Activated CD4-positive, alpha-beta memory T cell treated with anti-CD3 and anti-CD28 coated beads, Interleukin-2, amount 10 ng/mL, durations not matched to agents 7 days and 5 days (primary cell): ENCODE measurements at regions of chr9 and their contacts with region 1.

Region 1: GRCh38 chr9:71806901-71807307 is 38.6 kb upstream of the CEMIP2 start:
- DNase-seq: peak; percentile 68
- H3K4me3 Mint-ChIP-seq: no peak overlapping the region
- H3K27ac Mint-ChIP-seq: no peak overlapping the region
- H3K4me1 Mint-ChIP-seq: peaks cover 5% of the 10 kb centered on the region
- H3K27me3 Mint-ChIP-seq: no peaks in the 10 kb centered on the region

Region 2: GRCh38 chr9:71741711-71742648 is 64.9 kb before region 1 on chr9:
- CTCF ChIA-PET with region 1: no interaction called
- POLR2A ChIA-PET with region 1: no interaction called
- DNase-seq: no peak
- H3K4me3 Mint-ChIP-seq: no peak overlapping the region
- H3K27ac Mint-ChIP-seq: no peak overlapping the region
- H3K4me1 Mint-ChIP-seq: peaks cover 2% of the 10 kb centered on the region
- H3K27me3 Mint-ChIP-seq: no peaks in the 10 kb centered on the region

Region 3: DNA sequence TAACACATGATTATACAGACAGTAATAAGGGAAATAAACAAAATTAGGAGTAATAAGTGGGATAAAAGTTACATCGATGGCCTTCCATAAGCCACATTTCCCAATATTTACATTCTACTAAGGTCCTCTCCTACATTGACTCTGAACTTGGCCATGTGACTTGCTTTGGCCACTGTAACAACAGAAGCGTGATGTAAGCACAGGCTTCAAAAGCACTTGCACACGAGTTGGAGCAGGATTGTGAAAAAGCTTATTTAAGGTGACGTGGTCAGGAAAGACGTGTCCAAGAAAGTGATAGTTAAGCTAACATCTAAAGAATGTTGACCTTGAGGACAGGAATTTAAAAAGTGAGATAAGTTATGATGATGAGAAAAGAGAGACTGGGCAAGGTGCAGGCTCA is 28.8 kb before region 1 on chr9:
- CTCF ChIA-PET with region 1: interaction called, 21 read pairs
- POLR2A ChIA-PET with region 1: interaction called, 3 read pairs
- DNase-seq: no peak
- H3K4me3 Mint-ChIP-seq: no peak overlapping the region
- H3K27ac Mint-ChIP-seq: no peak overlapping the region
- H3K4me1 Mint-ChIP-seq: peaks cover 35% of the 10 kb centered on the region
- H3K27me3 Mint-ChIP-seq: no peaks in the 10 kb centered on the region

Region 4: GRCh38 chr9:71783120-71783530 is 23.8 kb before region 1 on chr9:
- CTCF ChIA-PET with region 1: interaction called, 21 read pairs
- POLR2A ChIA-PET with region 1: interaction called, 3 read pairs
- DNase-seq: peak; percentile 90
- H3K4me3 Mint-ChIP-seq: peak overlapping the region; percentile 59
- H3K27ac Mint-ChIP-seq: peak overlapping the region; percentile 98
- H3K4me1 Mint-ChIP-seq: peaks cover 46% of the 10 kb centered on the region
- H3K27me3 Mint-ChIP-seq: no peaks in the 10 kb centered on the region

Region 5: DNA sequence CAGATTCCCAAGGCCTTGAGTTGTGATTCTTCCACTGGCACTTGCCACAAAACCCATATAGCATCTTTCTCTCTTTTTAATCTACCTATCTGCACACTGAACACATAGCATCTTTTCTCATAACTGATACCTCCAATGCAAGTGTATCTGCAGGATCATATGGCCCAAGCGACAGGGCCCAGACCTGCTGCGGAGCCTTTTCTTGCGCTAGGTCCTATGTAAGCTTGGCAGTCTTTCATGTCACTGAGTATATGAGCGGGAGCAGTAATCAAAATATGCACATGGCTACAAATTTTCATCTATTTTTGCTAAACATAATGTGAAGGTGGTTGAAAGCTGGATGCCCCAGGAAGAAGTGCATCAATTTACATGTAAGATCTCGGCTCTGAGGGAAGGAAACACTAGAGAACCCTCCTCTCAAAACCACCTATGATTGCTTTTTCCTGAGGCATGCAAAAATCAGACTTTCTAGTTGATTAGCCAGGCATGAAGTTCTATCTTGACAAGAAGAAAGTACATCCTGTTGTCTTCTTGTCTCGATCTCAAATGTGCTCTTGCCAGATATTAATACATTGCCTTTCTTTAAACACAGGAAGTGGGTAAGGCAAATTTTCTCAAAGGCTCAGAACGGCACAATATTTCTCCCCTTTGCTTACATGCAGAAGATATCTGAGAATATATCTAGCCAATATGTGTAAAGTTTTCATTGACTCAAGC is 11.6 kb before region 1 on chr9:
- CTCF ChIA-PET with region 1: interaction called, 43 read pairs
- POLR2A ChIA-PET with region 1: interaction called, 3 read pairs
- DNase-seq: no peak
- H3K4me3 Mint-ChIP-seq: peak overlapping the region; percentile 56
- H3K27ac Mint-ChIP-seq: peak overlapping the region; percentile 98
- H3K4me1 Mint-ChIP-seq: peaks cover 46% of the 10 kb centered on the region
- H3K27me3 Mint-ChIP-seq: no peaks in the 10 kb centered on the region

Region 6: GRCh38 chr9:71819115-71819739 is 12.3 kb after region 1 on chr9:
- CTCF ChIA-PET with region 1: interaction called, 26 read pairs
- POLR2A ChIA-PET with region 1: no interaction called
- DNase-seq: peak; percentile 36
- H3K4me3 Mint-ChIP-seq: no peak overlapping the region
- H3K27ac Mint-ChIP-seq: no peak overlapping the region
- H3K4me1 Mint-ChIP-seq: peaks cover 19% of the 10 kb centered on the region
- H3K27me3 Mint-ChIP-seq: no peaks in the 10 kb centered on the region

Region 7: DNA sequence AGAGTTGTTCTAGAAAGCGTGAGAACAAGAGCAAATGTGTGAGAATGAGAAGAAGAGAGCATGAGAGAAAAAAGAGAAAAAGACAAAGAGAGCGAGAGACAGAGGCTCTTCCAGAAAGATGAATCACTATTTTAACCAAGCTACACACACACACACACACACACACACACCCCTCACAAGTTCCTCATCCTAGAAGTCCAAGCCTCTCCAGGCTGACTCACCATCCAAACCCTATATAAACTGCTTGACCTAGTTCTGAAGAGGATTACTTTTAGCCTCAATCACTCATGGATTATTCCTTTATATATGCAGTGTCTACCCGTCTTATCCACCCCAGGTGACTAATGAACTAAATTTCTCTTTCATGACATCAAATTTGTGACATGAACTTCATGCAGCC is 215.9 kb after region 1 on chr9:
- CTCF ChIA-PET with region 1: interaction called, 104 read pairs
- POLR2A ChIA-PET with region 1: no interaction called
- DNase-seq: no peak
- H3K4me3 Mint-ChIP-seq: no peak overlapping the region
- H3K27ac Mint-ChIP-seq: no peak overlapping the region
- H3K4me1 Mint-ChIP-seq: peaks cover 9% of the 10 kb centered on the region
- H3K27me3 Mint-ChIP-seq: no peaks in the 10 kb centered on the region

Region 8: GRCh38 chr9:72038890-72039410 is 232.0 kb after region 1 on chr9:
- CTCF ChIA-PET with region 1: interaction called, 11 read pairs
- POLR2A ChIA-PET with region 1: no interaction called
- DNase-seq: peak; percentile 69
- H3K4me3 Mint-ChIP-seq: no peak overlapping the region
- H3K27ac Mint-ChIP-seq: no peak overlapping the region
- H3K4me1 Mint-ChIP-seq: peaks cover 4% of the 10 kb centered on the region
- H3K27me3 Mint-ChIP-seq: peaks cover 32% of the 10 kb centered on the region